MCF 10A (cell line): ENCODE measurements at regions of chr5 and their contacts with region 1.

Region 1: GRCh38 chr5:139765409-139766217 is 30.0 kb upstream of the PSD2 start:
- DNase-seq: peak; percentile 85
- H3K4me3 Mint-ChIP-seq: peak overlapping the region; percentile 54
- H3K27ac Mint-ChIP-seq: no peak overlapping the region
- H3K4me1 Mint-ChIP-seq: peaks cover 13% of the 10 kb centered on the region
- H3K27me3 Mint-ChIP-seq: no peaks in the 10 kb centered on the region
- CTCF ChIP-seq: peak; percentile 98

Region 2: DNA sequence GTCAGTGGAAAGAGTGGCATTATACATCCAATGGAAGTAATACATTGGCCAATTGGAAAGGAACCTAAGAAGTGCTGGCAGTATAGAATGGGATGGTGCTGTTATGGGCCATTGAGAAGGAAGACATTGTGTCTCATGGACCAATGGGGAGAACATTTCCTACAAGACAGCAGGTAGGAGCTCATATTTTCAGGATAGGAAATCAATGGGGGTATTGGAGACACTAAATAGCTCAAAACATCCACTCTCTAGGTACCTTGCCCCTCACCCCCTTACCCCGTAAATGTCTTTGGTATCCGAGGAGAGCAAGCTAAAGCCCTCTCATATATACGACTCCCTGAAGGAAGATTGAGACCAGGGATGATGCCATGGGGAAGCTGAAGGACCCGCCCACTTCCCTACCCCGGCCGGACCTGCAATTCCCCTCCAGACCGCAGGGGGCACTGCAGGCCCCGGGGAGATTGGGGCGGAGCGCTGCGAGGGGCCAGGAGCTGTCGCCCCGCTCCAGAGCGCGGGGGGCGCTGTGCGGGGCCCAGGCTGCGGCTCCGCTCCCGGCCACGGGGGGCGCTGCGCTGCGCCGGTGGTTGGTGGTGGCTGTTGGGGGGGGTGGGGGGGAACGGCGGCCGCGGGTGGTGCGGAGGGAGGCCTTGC is 1413.4 kb before region 1 on chr5 and contains the start of gene KDM3B:
- CTCF ChIA-PET with region 1: no interaction called
- POLR2A ChIA-PET with region 1: no interaction called
- intact Hi-C with region 1: no loop called
- DNase-seq: peak; percentile 86
- H3K4me3 Mint-ChIP-seq: peak within 1 kb of the TSS; percentile 99
- H3K27ac Mint-ChIP-seq: peak within 1 kb of the TSS; percentile 98
- H3K4me1 Mint-ChIP-seq: peaks cover 51% of the 10 kb centered on the region
- H3K27me3 Mint-ChIP-seq: no peaks in the 10 kb centered on the region
- CTCF ChIP-seq: peak; percentile 100
- total RNA-seq, gene KDM3B: 57.8 and 59.0 TPM in 2 replicates

Region 3: DNA sequence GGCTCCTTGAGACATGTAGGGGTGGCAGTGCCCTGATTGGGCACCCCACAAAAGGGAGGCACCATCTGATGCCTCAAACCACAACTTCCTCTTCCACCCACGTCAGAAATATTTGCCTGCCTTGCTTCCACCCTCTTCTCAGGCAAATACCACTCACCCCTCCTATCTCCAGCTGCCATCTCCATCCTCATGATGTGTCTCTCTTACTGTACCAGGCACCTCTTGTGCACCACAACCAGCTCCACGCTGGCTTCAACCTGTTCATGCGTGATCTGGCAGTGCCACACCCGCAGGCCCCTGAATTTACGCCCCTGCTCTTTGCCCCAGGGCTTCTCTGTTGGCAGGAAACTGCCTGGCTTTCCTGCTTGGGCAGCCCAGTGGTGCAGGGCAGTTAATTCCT is 1102.6 kb before region 1 on chr5:
- CTCF ChIA-PET with region 1: no interaction called
- POLR2A ChIA-PET with region 1: no interaction called
- intact Hi-C with region 1: no loop called
- DNase-seq: peak; percentile 27
- H3K4me3 Mint-ChIP-seq: no peak overlapping the region
- H3K27ac Mint-ChIP-seq: no peak overlapping the region
- H3K4me1 Mint-ChIP-seq: peaks cover 29% of the 10 kb centered on the region
- H3K27me3 Mint-ChIP-seq: no peaks in the 10 kb centered on the region
- CTCF ChIP-seq: no peak

Region 4: DNA sequence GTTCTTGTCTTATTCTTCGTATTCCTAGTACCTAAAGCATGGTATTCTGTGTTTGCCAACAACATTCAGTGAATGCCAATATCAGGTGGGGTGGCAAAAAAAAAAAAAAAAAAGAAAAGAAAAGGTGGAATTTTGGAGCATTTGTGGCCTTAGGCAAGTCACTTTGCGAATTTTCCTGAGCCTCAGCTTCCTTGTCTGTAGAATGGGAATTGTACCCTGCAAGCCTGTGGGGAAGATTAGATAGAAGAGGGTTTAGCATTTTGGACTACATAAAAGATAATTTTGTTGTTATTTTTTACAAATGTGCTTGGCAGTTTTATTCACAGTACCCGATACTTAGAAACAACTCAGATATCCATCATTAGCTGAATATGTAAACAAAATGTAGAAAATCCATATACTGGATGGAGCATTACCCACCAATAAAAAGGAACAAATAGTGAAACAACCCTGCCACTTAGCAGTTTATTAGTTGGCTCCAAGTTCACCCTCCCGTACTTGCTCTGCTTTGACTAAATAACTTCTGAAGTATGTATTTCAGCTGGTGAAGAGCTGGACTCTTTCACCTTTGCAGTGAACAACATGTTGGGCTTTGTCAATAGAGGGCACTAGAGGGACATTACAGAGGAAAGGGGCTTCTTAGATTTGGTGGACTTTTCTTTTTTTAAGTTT is 190.8 kb before region 1 on chr5:
- CTCF ChIA-PET with region 1: no interaction called
- POLR2A ChIA-PET with region 1: no interaction called
- intact Hi-C with region 1: loop called (anchors 5 kb)
- DNase-seq: peak; percentile 70
- H3K4me3 Mint-ChIP-seq: no peak overlapping the region
- H3K27ac Mint-ChIP-seq: peak overlapping the region; percentile 71
- H3K4me1 Mint-ChIP-seq: peaks cover 42% of the 10 kb centered on the region
- H3K27me3 Mint-ChIP-seq: no peaks in the 10 kb centered on the region
- CTCF ChIP-seq: peak; percentile 75

Region 5: GRCh38 chr5:139678751-139679750 is 86.6 kb before region 1 on chr5:
- CTCF ChIA-PET with region 1: interaction called, 11 read pairs
- POLR2A ChIA-PET with region 1: no interaction called
- intact Hi-C with region 1: no loop called
- DNase-seq: no peak
- H3K4me3 Mint-ChIP-seq: no peak overlapping the region
- H3K27ac Mint-ChIP-seq: no peak overlapping the region
- H3K4me1 Mint-ChIP-seq: peaks cover 6% of the 10 kb centered on the region
- H3K27me3 Mint-ChIP-seq: no peaks in the 10 kb centered on the region
- CTCF ChIP-seq: no peak

Region 6: GRCh38 chr5:139696894-139697658 is 68.5 kb before region 1 on chr5:
- CTCF ChIA-PET with region 1: interaction called, 20 read pairs
- POLR2A ChIA-PET with region 1: no interaction called
- intact Hi-C with region 1: loop called (anchors 10 kb)
- DNase-seq: no peak
- H3K4me3 Mint-ChIP-seq: no peak overlapping the region
- H3K27ac Mint-ChIP-seq: no peak overlapping the region
- H3K4me1 Mint-ChIP-seq: no peaks in the 10 kb centered on the region
- H3K27me3 Mint-ChIP-seq: no peaks in the 10 kb centered on the region
- CTCF ChIP-seq: no peak

Region 7: GRCh38 chr5:139731281-139731680 is 34.3 kb before region 1 on chr5:
- CTCF ChIA-PET with region 1: interaction called, 11 read pairs
- POLR2A ChIA-PET with region 1: no interaction called
- intact Hi-C with region 1: no loop called
- DNase-seq: no peak
- H3K4me3 Mint-ChIP-seq: no peak overlapping the region
- H3K27ac Mint-ChIP-seq: peak overlapping the region; percentile 39
- H3K4me1 Mint-ChIP-seq: no peaks in the 10 kb centered on the region
- H3K27me3 Mint-ChIP-seq: no peaks in the 10 kb centered on the region
- CTCF ChIP-seq: no peak